HEK293T (cell line): ENCODE measurements at regions of chr13 and their contacts with region 1.

Region 1: GRCh38 chr13:99176309-99177276 is 24.1 kb upstream of the UBAC2 start:
- DNase-seq: peak; percentile 79

Region 2: GRCh38 chr13:98970330-98970729 is 206.3 kb before region 1 on chr13:
- CTCF ChIA-PET with region 1: no interaction called
- POLR2A ChIA-PET with region 1: no interaction called
- DNase-seq: no peak

Region 3: DNA sequence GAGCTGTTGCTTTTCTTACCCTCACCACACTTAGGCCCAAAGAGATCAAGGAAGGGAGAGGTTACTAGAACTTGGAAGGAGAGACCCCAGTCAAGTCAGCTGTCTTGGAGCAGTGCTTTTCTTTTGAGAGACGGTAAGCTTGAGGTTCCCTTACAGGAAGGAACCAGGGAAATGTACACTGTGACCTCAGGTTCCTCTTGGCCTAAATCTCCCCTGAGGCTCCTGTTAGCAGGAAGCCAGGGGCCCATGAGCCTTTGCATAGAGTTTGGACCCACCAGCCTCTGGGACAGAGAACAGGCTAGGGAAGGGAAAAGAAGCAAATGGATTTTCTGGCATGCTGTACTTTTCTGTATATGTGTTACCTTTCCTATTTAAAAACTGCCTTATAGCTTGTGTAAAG is 87.5 kb after region 1 on chr13:
- CTCF ChIA-PET with region 1: interaction called, 29 read pairs
- POLR2A ChIA-PET with region 1: no interaction called
- DNase-seq: no peak

Region 4: GRCh38 chr13:99436686-99437416 is 260.3 kb after region 1 on chr13:
- CTCF ChIA-PET with region 1: interaction called, 19 read pairs
- POLR2A ChIA-PET with region 1: no interaction called
- DNase-seq: peak; percentile 82